CD14-positive monocyte (primary cell): ENCODE measurements at regions of chr10 and their contacts with region 1.

Region 1: GRCh38 chr10:119608316-119609155 is 11.8 kb upstream of the TIAL1 start:
- DNase-seq: peak in 2 of 3 donors; percentile 23 to 25
- H3K4me3 ChIP-seq: no peak overlapping the region
- H3K4me3 Mint-ChIP-seq: peak overlapping the region in 1 of 2 donors; percentile 78
- H3K27ac ChIP-seq: no peak overlapping the region
- H3K27ac Mint-ChIP-seq: peak overlapping the region in 1 of 7 donors; percentile 32
- H3K4me1 ChIP-seq: peaks cover 0 to 2% of the 10 kb centered on the region in 2 donors
- H3K4me1 Mint-ChIP-seq: peaks cover 8% of the 10 kb centered on the region
- H3K27me3 ChIP-seq: no peaks in the 10 kb centered on the region
- H3K27me3 Mint-ChIP-seq: peaks cover 6 to 11% (median 8%) of the 10 kb centered on the region in 3 donors
- CTCF ChIP-seq: peak; percentile 27

Region 2: GRCh38 chr10:119061352-119061751 is 547.2 kb before region 1 on chr10:
- intact Hi-C with region 1: no loop called
- DNase-seq: no peak
- H3K4me3 ChIP-seq: no peak overlapping the region
- H3K4me3 Mint-ChIP-seq: no peak overlapping the region
- H3K27ac ChIP-seq: peak overlapping the region in 1 of 2 donors; percentile 28
- H3K27ac Mint-ChIP-seq: peak overlapping the region in 3 of 7 donors; percentile 15 to 77 (median 18)
- H3K4me1 ChIP-seq: no peaks in the 10 kb centered on the region
- H3K4me1 Mint-ChIP-seq: peaks cover 4% of the 10 kb centered on the region
- H3K27me3 ChIP-seq: no peaks in the 10 kb centered on the region
- H3K27me3 Mint-ChIP-seq: no peaks in the 10 kb centered on the region
- CTCF ChIP-seq: no peak

Region 3: GRCh38 chr10:119644205-119644814 is 35.8 kb after region 1 on chr10:
- intact Hi-C with region 1: loop called in 1 of 2 experiments (anchors 5 kb)
- DNase-seq: no peak
- H3K4me3 ChIP-seq: no peak overlapping the region
- H3K4me3 Mint-ChIP-seq: no peak overlapping the region
- H3K27ac ChIP-seq: no peak overlapping the region
- H3K27ac Mint-ChIP-seq: no peak overlapping the region
- H3K4me1 ChIP-seq: no peaks in the 10 kb centered on the region
- H3K4me1 Mint-ChIP-seq: peaks cover 3% of the 10 kb centered on the region
- H3K27me3 ChIP-seq: no peaks in the 10 kb centered on the region
- H3K27me3 Mint-ChIP-seq: peaks cover 0 to 5% (median 2%) of the 10 kb centered on the region in 3 donors
- CTCF ChIP-seq: no peak